Naive thymus-derived CD4-positive, alpha-beta T cell (primary cell): ENCODE measurements at regions of chr7 and their contacts with region 1.

Region 1: DNA sequence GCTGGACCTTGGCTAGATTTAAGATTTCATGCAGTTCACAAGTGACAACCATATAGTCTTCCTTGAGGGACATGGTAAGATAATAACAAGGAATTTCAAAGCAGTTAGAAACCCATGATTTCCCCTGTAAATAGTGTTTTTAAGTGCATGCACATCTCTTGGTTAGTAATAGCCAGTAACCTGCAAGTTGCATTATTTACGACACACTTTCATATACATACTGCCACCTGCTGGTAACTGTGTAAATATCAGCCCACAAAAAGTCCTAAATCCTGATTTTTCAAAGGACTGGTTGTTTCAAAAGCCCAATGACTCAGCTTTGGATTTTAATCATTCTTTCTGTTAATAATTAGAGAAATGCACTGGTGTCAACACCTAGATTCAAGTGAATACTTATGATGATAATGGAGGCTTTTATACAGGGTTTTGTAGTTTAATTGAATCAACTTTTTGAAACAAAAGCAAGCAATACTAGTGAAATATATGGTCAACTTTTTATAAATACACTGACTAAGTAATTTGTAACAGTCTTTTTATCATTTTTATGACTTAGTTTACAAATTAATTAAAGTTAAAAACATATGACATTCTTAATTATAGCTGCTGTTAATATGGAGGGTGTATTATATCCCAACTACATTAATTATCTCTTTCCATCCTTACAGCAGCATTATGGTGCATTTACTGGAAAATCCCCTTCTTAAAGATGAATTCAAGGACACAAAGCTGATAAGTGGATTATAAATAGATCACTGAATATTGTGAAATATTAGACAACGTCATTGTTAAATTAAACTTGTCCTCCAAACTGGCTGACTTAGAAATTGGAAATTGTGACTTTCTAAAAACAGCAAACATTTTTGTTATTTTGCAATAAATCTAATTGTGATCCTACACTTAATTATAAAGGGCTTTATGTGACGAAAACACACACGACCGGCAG is 367.7 kb upstream of the SEMA3D start:
- DNase-seq: peak in 6 of 9 donors; percentile 0 to 26 (median 10)
- ATAC-seq: peak; percentile 69
- H3K4me3 ChIP-seq: no peak overlapping the region
- H3K4me3 Mint-ChIP-seq: no peak overlapping the region
- H3K27ac ChIP-seq: no peak overlapping the region
- H3K27ac Mint-ChIP-seq: no peak overlapping the region
- H3K4me1 ChIP-seq: no peaks in the 10 kb centered on the region
- H3K4me1 Mint-ChIP-seq: peaks cover 0 to 1% (median 0%) of the 10 kb centered on the region in 7 donors
- H3K27me3 ChIP-seq: no peaks in the 10 kb centered on the region
- H3K27me3 Mint-ChIP-seq: no peaks in the 10 kb centered on the region

Region 2: DNA sequence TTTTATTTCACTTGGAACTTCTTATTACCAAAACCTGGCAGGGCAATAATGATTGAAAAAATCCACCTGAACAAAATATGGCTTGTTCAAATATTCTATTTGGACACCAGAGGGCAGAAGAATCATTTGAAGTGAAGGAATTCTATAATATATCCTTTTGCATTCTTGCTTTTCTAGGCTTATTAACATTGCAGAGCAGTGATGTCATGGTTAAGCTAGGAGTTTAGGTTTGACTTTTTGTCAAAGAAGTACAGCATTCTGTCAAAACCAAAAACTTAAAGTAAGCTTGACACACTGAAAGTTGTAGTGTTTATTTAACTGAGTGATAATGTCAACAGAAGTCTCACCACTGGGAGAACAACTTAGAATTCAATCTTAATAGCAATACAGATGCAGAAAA is 523.6 kb before region 1 on chr7:
- CTCF ChIA-PET with region 1: no interaction called
- POLR2A ChIA-PET with region 1: no interaction called
- intact Hi-C with region 1: loop called (anchors 1 to 2 kb)
- DNase-seq: no peak
- ATAC-seq: no peak
- H3K4me3 ChIP-seq: no peak overlapping the region
- H3K4me3 Mint-ChIP-seq: no peak overlapping the region
- H3K27ac ChIP-seq: no peak overlapping the region
- H3K27ac Mint-ChIP-seq: no peak overlapping the region
- H3K4me1 ChIP-seq: no peaks in the 10 kb centered on the region
- H3K4me1 Mint-ChIP-seq: no peaks in the 10 kb centered on the region
- H3K27me3 ChIP-seq: no peaks in the 10 kb centered on the region
- H3K27me3 Mint-ChIP-seq: peaks cover 0 to 15% (median 3%) of the 10 kb centered on the region in 5 donors

Region 3: GRCh38 chr7:85041605-85042216 is 512.8 kb before region 1 on chr7:
- CTCF ChIA-PET with region 1: no interaction called
- POLR2A ChIA-PET with region 1: no interaction called
- intact Hi-C with region 1: loop called in 1 of 2 experiments (anchors 1 kb)
- DNase-seq: peak in 2 of 9 donors; percentile 2 to 23
- ATAC-seq: no peak
- H3K4me3 ChIP-seq: no peak overlapping the region
- H3K4me3 Mint-ChIP-seq: no peak overlapping the region
- H3K27ac ChIP-seq: no peak overlapping the region
- H3K27ac Mint-ChIP-seq: no peak overlapping the region
- H3K4me1 ChIP-seq: no peaks in the 10 kb centered on the region
- H3K4me1 Mint-ChIP-seq: no peaks in the 10 kb centered on the region
- H3K27me3 ChIP-seq: no peaks in the 10 kb centered on the region
- H3K27me3 Mint-ChIP-seq: peaks cover 0 to 9% (median 0%) of the 10 kb centered on the region in 5 donors

Region 4: DNA sequence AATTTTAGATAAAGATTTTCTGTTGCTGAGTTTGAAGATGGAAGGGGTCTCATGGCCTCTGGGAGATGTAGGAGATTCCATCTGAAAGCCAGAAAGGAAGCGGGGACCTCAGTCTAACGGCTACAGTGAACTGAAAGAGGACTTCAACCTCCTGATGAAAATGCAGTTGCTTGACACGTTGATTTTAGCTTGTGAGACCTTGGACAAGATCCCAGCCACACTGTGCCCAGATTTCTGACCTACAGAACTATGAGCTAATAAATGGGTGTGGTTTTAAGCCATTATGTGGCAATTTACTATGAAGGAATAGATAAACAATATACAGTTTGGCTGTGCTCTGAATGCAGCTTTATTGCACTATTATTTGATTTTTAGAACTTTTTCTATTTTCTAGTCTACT is 25.3 kb before region 1 on chr7:
- CTCF ChIA-PET with region 1: no interaction called
- POLR2A ChIA-PET with region 1: no interaction called
- intact Hi-C with region 1: loop called in 1 of 2 experiments (anchors 1 kb)
- DNase-seq: no peak
- ATAC-seq: no peak
- H3K4me3 ChIP-seq: no peak overlapping the region
- H3K4me3 Mint-ChIP-seq: no peak overlapping the region
- H3K27ac ChIP-seq: no peak overlapping the region
- H3K27ac Mint-ChIP-seq: no peak overlapping the region
- H3K4me1 ChIP-seq: no peaks in the 10 kb centered on the region
- H3K4me1 Mint-ChIP-seq: no peaks in the 10 kb centered on the region
- H3K27me3 ChIP-seq: no peaks in the 10 kb centered on the region
- H3K27me3 Mint-ChIP-seq: no peaks in the 10 kb centered on the region

Region 5: DNA sequence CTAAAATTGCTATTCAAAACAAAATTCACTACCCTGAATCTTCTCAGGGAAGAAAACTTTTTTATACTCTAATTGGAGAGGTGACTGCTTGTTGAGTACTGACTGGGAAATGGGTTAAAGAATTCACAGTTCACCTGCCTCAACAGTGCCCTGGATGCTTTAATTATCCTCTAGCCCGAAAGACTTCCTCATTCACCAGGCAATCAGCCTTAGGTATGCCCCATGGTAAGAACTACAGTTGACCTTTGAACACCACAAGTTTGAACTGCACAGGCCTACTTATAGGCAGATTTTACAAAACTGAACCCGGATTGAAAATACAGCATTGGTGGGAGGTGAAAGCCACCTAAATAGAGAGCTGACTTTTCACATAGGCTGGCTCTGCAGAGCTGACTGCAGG is 1329.6 kb after region 1 on chr7:
- CTCF ChIA-PET with region 1: no interaction called
- POLR2A ChIA-PET with region 1: no interaction called
- intact Hi-C with region 1: no loop called
- DNase-seq: no peak
- ATAC-seq: no peak
- H3K4me3 ChIP-seq: no peak overlapping the region
- H3K4me3 Mint-ChIP-seq: no peak overlapping the region
- H3K27ac ChIP-seq: no peak overlapping the region
- H3K27ac Mint-ChIP-seq: no peak overlapping the region
- H3K4me1 ChIP-seq: no peaks in the 10 kb centered on the region
- H3K4me1 Mint-ChIP-seq: no peaks in the 10 kb centered on the region
- H3K27me3 ChIP-seq: no peaks in the 10 kb centered on the region
- H3K27me3 Mint-ChIP-seq: peaks cover 0 to 9% (median 0%) of the 10 kb centered on the region in 5 donors

Region 6: DNA sequence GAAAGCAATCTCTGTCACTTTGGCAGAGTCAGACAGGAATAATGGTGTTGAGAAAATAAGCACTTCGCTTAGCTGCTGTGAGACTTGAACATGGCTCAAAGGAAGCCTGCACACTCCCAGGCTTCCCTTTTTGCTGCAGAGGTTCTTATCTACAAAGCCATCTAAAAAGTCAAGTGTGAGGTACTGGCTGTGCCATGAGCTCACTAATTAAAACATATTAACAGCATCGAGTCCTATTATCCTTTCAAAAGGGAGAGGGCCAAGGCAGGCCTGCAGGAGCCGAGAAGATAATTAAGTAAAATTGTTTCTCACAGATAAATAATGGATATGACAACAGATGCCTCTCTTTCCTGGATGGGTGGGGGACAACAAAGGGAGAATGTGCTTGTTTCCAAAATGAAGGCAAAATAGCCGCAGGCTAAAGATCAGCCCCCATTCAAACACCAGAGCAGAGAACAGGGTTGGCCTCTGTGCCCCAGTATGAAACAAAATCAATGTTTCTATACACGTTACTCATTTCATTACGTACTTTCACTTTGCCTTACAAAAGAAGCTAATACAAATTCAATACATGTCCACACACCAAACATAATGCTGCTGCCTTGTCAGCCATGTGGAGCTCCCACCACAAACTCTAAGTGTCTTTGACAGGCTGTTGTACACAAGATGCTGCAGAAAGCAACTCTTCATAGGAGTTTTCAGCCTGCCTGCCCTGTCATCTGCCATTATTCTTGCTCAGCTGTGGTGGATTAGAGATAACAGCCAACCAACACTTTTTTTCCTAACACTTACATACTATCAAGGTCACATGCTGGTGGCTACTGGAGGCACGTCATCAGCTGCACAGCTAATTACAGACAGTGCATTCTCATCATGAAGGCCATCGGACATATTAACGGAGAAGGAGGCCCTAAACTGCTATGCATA is 1449.6 kb after region 1 on chr7:
- CTCF ChIA-PET with region 1: no interaction called
- POLR2A ChIA-PET with region 1: no interaction called
- intact Hi-C with region 1: no loop called
- DNase-seq: no peak
- ATAC-seq: no peak
- H3K4me3 ChIP-seq: no peak overlapping the region
- H3K4me3 Mint-ChIP-seq: peak overlapping the region in 4 of 10 donors; percentile 4 to 43 (median 22)
- H3K27ac ChIP-seq: no peak overlapping the region
- H3K27ac Mint-ChIP-seq: peak overlapping the region in 1 of 9 donors; percentile 44
- H3K4me1 ChIP-seq: no peaks in the 10 kb centered on the region
- H3K4me1 Mint-ChIP-seq: peaks cover 0 to 9% (median 0%) of the 10 kb centered on the region in 7 donors
- H3K27me3 ChIP-seq: no peaks in the 10 kb centered on the region
- H3K27me3 Mint-ChIP-seq: peaks cover 0 to 13% (median 0%) of the 10 kb centered on the region in 5 donors